Activated naive CD8-positive, alpha-beta T cell treated with anti-CD3 and anti-CD28 coated beads, Interleukin-2, amount 10 ng/mL, durations not matched to agents 7 days and 5 days (primary cell): ENCODE measurements at regions of chr12 and their contacts with region 1.

Region 1: DNA sequence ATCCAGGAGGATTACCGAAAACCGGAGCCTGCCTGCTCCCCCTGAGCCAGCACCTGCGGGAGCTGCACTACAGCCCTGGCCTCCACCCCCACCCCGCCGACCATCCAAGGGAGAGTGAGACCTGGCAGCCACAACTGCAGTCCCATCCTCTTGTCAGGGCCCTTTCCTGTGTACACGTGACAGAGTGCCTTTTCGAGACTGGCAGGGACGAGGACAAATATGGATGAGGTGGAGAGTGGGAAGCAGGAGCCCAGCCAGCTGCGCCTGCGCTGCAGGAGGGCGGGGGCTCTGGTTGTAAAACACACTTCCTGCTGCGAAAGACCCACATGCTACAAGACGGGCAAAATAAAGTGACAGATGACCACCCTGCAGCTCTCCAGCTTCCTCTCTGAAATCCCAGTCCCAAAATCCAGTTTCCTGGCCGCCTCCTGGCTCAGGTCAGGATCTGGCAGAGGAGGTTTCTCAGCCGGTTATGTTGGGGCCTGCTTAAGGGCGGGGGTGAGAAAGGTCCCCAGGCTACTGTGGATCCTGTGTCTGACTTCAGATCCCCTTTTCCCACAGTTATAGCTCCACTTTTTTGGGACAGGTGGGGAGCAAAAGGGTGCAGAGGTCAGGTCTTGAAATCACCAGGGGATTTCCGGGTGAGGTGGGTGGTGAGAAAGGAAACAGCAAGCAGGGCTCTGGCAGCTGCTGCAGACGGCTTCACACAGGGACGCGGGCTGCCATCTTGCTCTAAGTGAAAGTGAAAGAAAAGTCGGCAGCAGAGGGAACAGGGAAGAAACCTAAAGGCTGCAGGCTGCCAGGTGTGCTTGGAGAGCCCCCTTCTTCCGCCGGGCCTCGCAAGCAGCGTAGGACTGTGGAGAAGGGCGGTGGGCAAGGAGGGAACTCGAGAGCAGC is at the start of gene TAPBPL:
- DNase-seq: peak; percentile 73
- ATAC-seq: peak; percentile 83
- H3K4me3 Mint-ChIP-seq: peak within 1 kb of the TSS; percentile 98
- H3K27ac Mint-ChIP-seq: peak within 1 kb of the TSS; percentile 98
- H3K4me1 Mint-ChIP-seq: peaks cover 51% of the 10 kb centered on the region
- H3K27me3 Mint-ChIP-seq: no peaks in the 10 kb centered on the region
- total RNA-seq, gene TAPBPL: 49.4 to 50.1 TPM

Region 2: GRCh38 chr12:6423267-6424007 is 28.2 kb before region 1 on chr12:
- POLR2A ChIA-PET with region 1: interaction called, 39 read pairs
- DNase-seq: peak; percentile 69
- ATAC-seq: peak; percentile 81
- H3K4me3 Mint-ChIP-seq: no peak overlapping the region
- H3K27ac Mint-ChIP-seq: peak overlapping the region; percentile 76
- H3K4me1 Mint-ChIP-seq: peaks cover 45% of the 10 kb centered on the region
- H3K27me3 Mint-ChIP-seq: peaks cover 7% of the 10 kb centered on the region

Region 3: DNA sequence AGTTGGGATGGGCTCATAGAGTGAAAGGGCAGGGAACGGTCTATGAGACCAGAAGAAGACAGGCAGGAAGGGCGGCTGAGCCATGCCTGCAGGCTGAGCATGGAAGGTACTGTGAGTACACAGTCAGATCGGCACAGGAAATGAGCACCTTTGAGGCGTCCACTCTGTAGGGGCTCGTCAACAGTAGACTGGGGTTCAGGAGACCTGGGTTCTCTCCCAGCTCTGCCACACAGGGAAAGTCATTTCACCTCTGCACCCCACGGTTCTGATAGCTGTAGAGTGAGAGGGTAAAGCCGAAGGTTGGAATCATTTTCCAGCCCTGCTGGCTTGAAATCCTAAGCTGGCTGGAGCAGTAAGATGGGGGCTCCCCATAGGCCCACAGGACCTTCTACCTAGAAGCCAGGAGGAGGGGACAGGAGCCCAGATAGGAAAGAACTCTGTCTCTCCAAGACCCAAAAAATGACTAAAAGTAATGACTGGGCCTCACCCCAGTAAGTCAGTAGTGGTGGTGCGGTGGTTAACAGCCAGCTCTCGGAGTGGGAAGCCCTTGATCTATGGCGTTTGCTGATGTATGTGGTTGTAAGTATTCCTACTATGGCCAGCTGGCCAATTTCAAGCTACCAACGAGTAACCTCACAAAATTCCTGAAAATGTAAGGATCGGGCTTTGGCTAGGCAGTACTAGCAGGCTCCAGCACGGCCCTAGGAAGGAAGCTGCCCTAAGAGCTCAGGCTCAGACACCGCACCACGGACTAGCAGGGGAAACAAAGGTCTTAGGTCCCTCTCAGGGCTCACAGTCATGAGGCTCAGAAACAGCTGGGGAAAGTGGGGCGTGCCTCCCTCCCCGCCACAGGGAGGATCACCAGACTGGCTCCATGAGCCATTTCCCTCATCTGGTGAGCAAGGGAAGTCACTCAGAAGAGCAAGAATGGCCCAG is 17.1 kb before region 1 on chr12:
- POLR2A ChIA-PET with region 1: interaction called, 80 read pairs
- DNase-seq: no peak
- ATAC-seq: peak; percentile 95
- H3K4me3 Mint-ChIP-seq: peak overlapping the region; percentile 69
- H3K27ac Mint-ChIP-seq: peak overlapping the region; percentile 90
- H3K4me1 Mint-ChIP-seq: peaks cover 37% of the 10 kb centered on the region
- H3K27me3 Mint-ChIP-seq: no peaks in the 10 kb centered on the region

Region 4: DNA sequence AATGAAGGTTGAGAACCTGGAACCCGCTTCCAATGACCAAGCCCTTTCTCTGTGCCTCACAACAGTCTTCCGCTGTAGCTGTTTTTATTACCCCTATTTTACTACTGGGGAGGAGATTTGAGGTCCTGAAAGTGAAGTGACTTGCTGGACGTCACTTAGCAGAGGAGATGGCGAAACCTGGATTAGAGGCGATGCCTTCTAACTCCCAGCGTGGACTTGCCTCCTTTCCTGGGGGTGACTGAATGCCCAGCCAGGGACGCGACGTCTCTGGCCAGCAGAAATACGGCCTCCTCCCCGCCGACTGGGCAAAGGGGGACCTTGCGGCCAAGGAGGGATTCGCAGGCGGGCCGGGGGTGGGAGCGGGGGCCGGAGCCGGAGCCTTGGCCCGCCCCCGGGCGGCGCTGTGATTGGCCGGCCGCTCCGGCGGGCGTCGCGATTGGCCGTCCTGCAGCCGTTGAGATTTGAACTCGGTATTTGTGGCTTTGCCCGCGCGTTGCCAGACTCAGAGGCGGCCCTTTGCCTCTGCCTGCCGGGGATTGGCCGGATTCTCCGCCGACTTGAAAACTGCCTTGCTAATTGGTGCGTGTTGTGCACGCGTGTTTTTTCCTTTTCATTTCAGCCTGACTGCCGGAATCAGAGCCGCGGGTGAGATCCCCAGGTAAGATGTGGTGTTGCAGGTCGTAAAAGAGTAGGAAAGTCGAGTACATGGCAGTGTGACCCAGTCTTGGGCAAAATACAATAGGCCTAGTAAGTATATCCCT is 42.1 kb after region 1 on chr12 and contains the start of gene NCAPD2:
- POLR2A ChIA-PET with region 1: interaction called, 14 read pairs
- DNase-seq: peak; percentile 94
- ATAC-seq: peak; percentile 87
- H3K4me3 Mint-ChIP-seq: peak within 1 kb of the TSS; percentile 97
- H3K27ac Mint-ChIP-seq: peak within 1 kb of the TSS; percentile 97
- H3K4me1 Mint-ChIP-seq: peaks cover 28% of the 10 kb centered on the region
- H3K27me3 Mint-ChIP-seq: no peaks in the 10 kb centered on the region
- total RNA-seq, gene NCAPD2: 147 to 157 TPM

Region 5: DNA sequence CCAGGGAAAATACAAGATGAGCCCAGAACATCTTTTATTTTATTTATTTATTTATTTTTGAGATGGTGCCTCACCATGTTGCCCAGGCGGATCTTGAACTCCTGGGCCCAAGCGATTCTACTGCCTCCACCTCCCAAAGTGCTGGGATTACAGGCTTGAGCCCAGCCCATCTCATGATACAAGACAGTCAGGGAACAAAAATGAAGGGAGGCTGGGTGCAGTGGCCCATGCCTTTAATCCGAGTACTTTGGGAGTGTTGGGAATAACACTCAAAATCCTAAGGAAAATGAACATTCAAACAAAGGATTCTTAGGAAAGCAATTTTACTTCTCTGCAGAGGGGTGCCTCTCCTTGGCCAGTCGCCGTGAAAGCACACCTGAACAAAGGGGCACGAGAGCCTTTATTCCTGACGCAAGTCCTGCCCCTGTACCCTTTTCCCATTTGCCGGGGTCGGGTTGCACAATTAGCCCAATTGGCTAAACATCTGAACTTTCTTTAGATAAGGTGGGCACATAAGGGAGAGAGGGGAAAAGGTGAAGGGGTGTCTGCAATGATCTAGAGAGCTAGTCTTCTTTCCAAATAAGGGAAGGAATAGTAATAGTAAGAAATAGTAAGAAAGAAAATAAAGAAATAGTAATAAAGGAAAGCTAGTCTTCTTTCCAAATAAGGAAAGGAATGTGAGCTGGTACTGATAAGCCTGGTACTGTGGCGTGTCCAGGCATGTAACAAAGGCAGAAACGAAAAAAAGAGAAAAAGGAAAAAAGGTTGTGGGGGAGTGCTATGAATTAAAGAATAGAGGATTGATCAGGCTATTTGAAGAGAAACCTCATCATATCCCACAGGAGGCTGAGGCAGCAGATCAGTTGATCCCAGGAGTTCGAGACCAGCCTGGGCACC is 55.8 kb after region 1 on chr12:
- POLR2A ChIA-PET with region 1: no interaction called
- DNase-seq: no peak
- ATAC-seq: no peak
- H3K4me3 Mint-ChIP-seq: no peak overlapping the region
- H3K27ac Mint-ChIP-seq: no peak overlapping the region
- H3K4me1 Mint-ChIP-seq: peaks cover 7% of the 10 kb centered on the region
- H3K27me3 Mint-ChIP-seq: no peaks in the 10 kb centered on the region